ENCODE measurements at regions of chr1 and their contacts with region 1.

Region 1: DNA sequence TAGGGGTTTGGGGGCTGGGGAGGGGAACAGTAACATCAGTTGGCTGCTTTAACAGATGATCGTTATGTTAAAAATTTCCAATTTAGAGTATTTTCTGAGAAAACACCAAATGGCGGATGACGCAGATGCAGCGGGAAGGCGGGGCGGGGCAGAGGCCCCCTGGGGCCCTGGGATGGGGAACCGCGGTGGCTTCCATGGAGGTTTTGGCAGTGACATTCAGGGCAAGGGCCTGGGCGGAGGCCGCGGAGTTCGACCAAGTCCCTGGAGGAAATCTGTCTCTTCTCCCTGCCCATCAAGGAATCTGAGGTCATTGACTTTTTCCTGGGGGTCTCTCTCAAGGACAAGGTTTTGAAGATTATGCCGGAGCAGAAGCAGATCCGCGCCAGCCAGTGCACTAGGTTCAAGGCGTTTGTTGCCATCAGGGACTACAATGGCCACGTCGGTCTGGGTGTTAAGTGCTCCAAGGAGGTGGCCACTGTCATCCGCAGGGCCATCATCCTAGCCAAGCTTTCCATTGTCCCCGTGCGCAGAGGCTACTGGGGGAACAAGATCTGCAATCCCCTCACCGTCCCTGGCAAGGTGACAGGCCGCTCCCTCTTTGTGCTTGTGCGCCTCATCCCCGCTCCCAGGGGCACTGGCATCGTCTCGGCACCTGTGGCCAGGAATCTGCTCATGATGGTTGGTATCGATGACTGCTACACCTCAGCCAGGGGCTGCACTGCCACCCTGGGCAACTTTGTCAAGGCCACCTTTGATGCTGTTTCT is 310.2 kb downstream of the PTPRC start:
- DNase-seq: no peak
- H3K4me3 ChIP-seq: no peak overlapping the region
- H3K27ac ChIP-seq: no peak overlapping the region
- H3K4me1 ChIP-seq: no peaks in the 10 kb centered on the region
- H3K27me3 ChIP-seq: no peaks in the 10 kb centered on the region
- CTCF ChIP-seq: no peak
- POLR2A ChIP-seq: no peak

Region 2: GRCh38 chr1:199298825-199299224 is 349.7 kb after region 1 on chr1:
- intact Hi-C with region 1: loop called (anchors 5 kb)
- DNase-seq: no peak
- H3K4me3 ChIP-seq: no peak overlapping the region
- H3K27ac ChIP-seq: no peak overlapping the region
- H3K4me1 ChIP-seq: no peaks in the 10 kb centered on the region
- H3K27me3 ChIP-seq: no peaks in the 10 kb centered on the region
- CTCF ChIP-seq: no peak
- POLR2A ChIP-seq: no peak

Region 3: DNA sequence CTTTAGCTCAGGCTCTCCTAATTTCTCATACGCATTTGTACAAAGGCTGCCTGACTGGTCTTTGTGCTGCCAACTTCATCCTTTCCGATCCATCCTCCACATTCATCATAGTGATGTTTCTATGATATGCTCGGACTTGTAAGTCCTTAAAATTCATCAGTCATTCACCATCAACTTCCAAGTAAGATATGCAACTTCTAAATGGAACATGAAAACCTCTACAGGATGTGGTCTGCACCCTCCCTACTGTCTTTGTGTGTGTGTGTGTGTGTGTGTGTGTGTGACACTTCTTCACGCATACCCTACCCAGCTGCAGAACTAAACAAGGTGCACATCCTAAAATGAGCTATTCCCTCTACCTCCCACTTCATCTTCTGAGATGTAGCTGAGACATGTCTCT is 680.5 kb after region 1 on chr1:
- intact Hi-C with region 1: no loop called
- DNase-seq: no peak
- H3K4me3 ChIP-seq: no peak overlapping the region
- H3K27ac ChIP-seq: no peak overlapping the region
- H3K4me1 ChIP-seq: no peaks in the 10 kb centered on the region
- H3K27me3 ChIP-seq: no peaks in the 10 kb centered on the region
- CTCF ChIP-seq: no peak
- POLR2A ChIP-seq: no peak